CD4-positive, alpha-beta memory T cell (primary cell): ENCODE measurements at regions of chr4 and their contacts with region 1.

Region 1: GRCh38 chr4:163967263-163967662 is 472.8 kb downstream of the TMA16 start:
- DNase-seq: no peak
- H3K4me3 ChIP-seq: no peak overlapping the region
- H3K4me3 Mint-ChIP-seq: no peak overlapping the region
- H3K27ac ChIP-seq: no peak overlapping the region
- H3K27ac Mint-ChIP-seq: no peak overlapping the region
- H3K4me1 ChIP-seq: no peaks in the 10 kb centered on the region
- H3K4me1 Mint-ChIP-seq: peaks cover 0 to 1% (median 0%) of the 10 kb centered on the region in 4 donors
- H3K27me3 ChIP-seq: no peaks in the 10 kb centered on the region
- H3K27me3 Mint-ChIP-seq: peaks cover 0 to 2% of the 10 kb centered on the region in 2 donors

Region 2: DNA sequence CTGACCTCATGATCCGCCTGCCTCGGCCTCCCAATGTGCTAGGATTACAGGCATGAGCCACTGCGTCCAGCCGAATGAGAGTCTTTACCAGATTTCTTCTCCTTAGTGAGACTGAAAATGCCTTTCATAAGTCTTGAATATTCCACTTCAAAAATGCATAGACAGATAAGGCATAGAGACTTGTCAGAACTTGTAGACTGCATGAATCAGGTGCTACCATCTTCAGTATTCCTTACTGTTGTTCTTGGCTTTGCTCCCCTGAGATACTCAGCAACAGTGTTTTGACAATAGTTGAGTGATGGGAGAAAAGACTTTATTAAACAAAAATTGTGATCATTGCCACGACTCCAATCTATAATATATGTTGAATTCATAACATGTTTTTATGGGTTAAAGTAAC is 504.7 kb before region 1 on chr4:
- CTCF ChIA-PET with region 1: no interaction called
- POLR2A ChIA-PET with region 1: no interaction called
- intact Hi-C with region 1: no loop called
- DNase-seq: no peak
- H3K4me3 ChIP-seq: no peak overlapping the region
- H3K4me3 Mint-ChIP-seq: no peak overlapping the region
- H3K27ac ChIP-seq: no peak overlapping the region
- H3K27ac Mint-ChIP-seq: no peak overlapping the region
- H3K4me1 ChIP-seq: no peaks in the 10 kb centered on the region
- H3K4me1 Mint-ChIP-seq: no peaks in the 10 kb centered on the region
- H3K27me3 ChIP-seq: no peaks in the 10 kb centered on the region
- H3K27me3 Mint-ChIP-seq: peaks cover 5 to 17% of the 10 kb centered on the region in 2 donors

Region 3: DNA sequence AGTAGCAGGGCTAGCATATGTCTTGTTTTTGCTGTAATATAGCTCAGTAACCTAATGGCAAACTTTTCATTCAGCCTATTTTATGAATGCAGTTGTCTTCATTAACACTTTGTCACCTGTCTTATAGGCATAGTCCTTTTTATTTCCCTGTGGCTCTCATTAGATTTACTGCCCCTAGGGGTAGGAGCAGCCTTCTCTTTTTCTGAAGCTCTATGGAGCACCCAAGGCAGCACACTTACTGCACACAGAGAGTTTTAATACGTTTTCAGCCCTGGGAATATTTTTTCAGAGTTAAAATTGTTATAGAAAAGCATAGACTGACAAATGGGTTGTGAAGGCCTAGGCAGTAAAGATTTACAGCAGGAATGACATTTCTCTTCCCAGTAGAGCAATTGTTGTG is 65.9 kb before region 1 on chr4:
- CTCF ChIA-PET with region 1: no interaction called
- POLR2A ChIA-PET with region 1: no interaction called
- intact Hi-C with region 1: loop called (anchors 10 kb)
- DNase-seq: no peak
- H3K4me3 ChIP-seq: no peak overlapping the region
- H3K4me3 Mint-ChIP-seq: no peak overlapping the region
- H3K27ac ChIP-seq: no peak overlapping the region
- H3K27ac Mint-ChIP-seq: no peak overlapping the region
- H3K4me1 ChIP-seq: peaks cover 3% of the 10 kb centered on the region
- H3K4me1 Mint-ChIP-seq: peaks cover 4 to 11% (median 7%) of the 10 kb centered on the region in 4 donors
- H3K27me3 ChIP-seq: no peaks in the 10 kb centered on the region
- H3K27me3 Mint-ChIP-seq: no peaks in the 10 kb centered on the region